RWPE1 (cell line): ENCODE measurements at regions of chr4 and their contacts with region 1.

Region 1: GRCh38 chr4:78818530-78819079 is 42.5 kb downstream of the BMP2K start:
- DNase-seq: no peak
- H3K27ac ChIP-seq: no peak overlapping the region
- CTCF ChIP-seq: no peak

Region 2: GRCh38 chr4:78627966-78628678 is 190.5 kb before region 1 on chr4:
- CTCF ChIA-PET with region 1: no interaction called
- POLR2A ChIA-PET with region 1: interaction called, 12 read pairs
- DNase-seq: no peak
- H3K27ac ChIP-seq: no peak overlapping the region
- CTCF ChIP-seq: no peak